AG04449 (cell line): ENCODE measurements at regions of chr6 and their contacts with region 1.

Region 1: DNA sequence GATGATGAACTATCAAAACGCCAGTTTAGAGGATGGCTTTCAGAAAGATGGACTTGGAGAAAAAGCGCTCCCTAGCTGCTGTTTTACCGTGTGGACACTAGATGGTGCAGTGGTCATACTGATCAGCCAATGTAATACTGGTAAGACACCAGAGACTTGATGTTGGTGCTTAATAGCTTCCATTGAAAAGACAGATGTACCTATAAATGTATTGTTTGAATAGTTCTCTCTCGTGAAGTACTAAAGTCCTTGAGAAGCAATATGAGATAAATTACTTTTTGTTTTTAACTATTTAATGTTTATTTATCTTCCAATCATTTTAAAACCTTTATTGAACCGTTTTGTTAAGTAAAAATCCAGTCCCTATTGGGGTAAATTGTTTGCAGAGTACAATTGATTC is 63.9 kb upstream of the FUCA2 start:
- DNase-seq: no peak
- H3K4me3 ChIP-seq: no peak overlapping the region
- CTCF ChIP-seq: peak; percentile 77

Region 2: DNA sequence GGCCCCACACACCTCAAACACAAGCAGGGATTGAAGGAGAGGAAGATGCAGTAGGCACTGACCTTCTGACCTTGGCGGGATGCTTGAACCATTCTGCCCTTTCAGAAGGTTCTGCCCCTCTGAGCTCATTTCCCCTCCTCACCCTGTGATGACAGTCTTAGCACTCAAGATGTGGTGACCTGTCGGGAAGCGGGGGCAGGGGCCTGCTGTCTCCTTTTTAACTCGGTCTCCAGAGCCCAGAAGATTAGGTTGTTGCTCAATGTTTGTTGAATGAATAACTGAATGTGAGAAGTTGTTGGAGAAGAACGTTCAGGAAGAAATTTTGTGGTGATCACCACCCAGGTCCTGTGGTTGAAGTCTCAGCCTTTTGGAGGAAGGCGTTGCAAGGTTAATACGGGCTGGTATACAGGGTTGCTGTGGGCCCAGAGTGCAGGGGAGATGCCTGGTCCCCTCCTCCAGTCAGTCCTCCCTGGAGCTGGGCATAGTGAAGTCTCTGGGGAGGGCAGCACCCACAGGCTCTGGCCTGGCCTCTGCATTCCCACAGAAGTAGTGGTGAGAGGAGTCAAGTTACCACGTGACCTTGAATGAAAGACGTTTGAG is 14.2 kb before region 1 on chr6:
- CTCF ChIA-PET with region 1: interaction called, 17 read pairs
- POLR2A ChIA-PET with region 1: no interaction called
- DNase-seq: no peak
- H3K4me3 ChIP-seq: no peak overlapping the region
- CTCF ChIP-seq: no peak

Region 3: DNA sequence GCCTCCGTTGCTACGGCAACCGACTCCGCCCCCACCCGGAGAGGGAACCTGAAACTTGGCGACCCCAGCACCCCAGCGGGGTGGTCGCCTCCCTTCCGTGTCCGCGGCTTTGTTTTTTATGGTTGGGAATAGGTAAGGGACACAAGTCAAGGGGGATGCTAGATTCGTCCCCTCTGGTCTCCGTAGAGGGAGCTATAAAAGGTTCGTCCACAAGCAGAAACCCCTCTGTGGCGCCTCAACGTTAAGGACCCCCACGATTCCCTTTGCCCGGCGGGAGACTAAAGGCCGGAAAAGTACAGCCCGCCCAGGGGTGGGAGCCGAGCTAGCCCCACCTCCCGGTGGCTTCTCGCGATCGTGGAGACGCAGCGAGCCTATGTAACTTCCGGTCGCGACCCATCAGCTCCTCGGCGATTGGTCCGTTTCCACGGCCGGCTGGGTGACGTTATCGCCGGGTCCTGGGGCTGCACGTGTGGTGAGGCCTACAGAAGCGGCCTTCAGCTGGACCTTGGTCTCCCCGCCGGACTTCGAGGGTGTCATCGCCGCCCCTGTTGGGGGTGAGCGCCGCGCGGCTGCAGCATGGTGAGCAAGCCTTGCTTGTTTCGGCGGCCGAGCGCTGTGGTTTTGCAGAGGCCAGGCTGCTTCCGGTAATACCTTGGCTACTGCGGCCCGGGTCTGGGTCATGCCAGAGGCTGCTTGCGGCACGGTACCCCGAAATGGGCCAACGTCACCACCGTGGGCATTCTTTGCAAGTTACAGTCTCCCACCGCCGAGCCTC is 267.6 kb after region 1 on chr6 and contains the start of gene LTV1:
- CTCF ChIA-PET with region 1: interaction called, 33 read pairs
- POLR2A ChIA-PET with region 1: interaction called, 9 read pairs
- DNase-seq: peak; percentile 66
- H3K4me3 ChIP-seq: peak within 1 kb of the TSS; percentile 99
- CTCF ChIP-seq: no peak

Region 4: DNA sequence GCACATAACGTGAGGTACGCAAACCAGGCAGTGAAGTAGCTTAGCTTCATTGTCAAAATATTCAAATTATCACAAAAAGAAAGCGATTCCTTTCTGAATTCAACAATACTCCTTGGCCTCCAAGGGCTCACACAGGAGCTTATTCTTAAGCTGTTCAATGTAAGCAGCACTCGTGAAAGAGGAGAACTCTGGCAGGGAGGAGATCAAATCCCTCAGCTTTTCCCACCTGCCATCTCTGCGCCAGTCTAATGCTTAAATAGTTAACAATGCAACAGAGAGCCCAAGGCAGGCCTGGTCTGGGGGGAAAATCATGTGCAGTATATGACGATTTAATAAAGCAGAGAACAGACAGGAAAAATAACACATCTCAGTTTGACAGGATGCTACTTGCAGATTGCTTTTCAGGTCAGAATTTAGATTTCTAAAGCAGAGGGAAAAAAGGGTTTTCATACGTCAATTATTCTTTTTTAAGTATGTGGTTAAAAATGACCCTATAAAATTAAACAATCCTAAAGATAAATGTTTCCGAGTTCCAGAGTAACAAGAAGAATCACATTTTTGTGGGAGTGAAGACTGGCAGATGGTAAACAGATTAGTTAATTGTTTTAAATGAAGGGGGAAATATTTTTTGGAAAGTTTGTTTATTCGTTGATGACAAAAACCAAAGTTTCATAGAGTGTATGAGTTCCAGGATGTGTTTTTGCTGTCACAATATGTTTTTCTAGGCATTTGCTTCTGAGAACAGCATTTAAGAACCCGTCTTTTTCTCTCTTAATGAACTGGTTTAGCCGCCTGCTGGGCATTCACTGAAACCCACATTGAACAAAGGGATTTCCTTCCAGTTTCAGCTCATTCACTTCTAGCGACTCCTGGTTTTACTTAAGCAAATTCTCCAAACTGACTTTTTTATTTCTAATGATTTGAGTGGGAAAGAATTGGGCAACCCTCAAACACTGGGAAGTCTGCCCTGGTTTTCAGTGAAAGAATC is 386.7 kb after region 1 on chr6:
- CTCF ChIA-PET with region 1: interaction called, 15 read pairs
- POLR2A ChIA-PET with region 1: no interaction called
- DNase-seq: peak; percentile 10
- H3K4me3 ChIP-seq: no peak overlapping the region
- CTCF ChIP-seq: peak; percentile 36

Region 5: DNA sequence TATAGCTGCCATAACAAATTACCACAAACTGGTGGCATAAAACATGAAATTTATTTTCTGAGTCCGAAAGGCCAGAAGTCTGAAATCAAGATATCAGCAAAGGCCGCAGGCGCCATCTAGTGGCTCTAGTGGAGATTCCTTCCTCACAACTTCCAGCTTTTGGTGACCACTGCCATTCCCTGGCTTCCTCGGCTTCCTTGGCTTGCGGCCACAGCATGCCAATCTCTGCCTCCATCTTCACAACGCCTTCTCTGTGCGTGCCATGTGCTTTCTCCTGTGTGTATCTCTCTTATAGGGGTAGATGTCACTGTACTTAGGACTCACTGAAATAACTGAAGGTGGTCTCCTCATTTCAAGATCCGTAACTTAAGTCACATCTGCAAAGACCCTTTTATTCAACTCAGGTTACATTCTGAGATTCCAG is 438.1 kb after region 1 on chr6:
- CTCF ChIA-PET with region 1: interaction called, 243 read pairs
- POLR2A ChIA-PET with region 1: interaction called, 5 read pairs
- DNase-seq: no peak
- H3K4me3 ChIP-seq: no peak overlapping the region
- CTCF ChIP-seq: peak; percentile 84

Region 6: DNA sequence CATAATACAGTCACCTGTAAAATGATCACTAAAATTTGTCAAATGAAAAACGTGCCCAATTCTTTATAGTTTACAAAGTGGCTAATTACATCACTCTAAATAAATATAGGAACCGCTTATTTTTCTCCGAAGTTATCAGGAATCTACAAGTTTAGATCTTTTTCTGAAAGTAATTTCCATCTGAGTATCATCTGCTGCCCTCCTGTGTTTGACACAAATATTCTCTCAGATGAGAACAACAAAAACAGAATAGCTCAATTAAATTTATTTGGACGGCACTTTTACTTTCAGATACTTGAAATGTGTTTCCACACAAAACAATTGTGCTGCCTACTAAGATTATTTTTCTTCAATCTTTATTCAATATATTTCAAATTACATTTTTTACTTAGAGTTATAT is 514.9 kb after region 1 on chr6:
- CTCF ChIA-PET with region 1: interaction called, 10 read pairs
- POLR2A ChIA-PET with region 1: no interaction called
- DNase-seq: no peak
- H3K4me3 ChIP-seq: no peak overlapping the region
- CTCF ChIP-seq: no peak